Aorta (tissue), 5 donors: ENCODE measurements at regions of chr6 and their contacts with region 1.

Region 1: GRCh38 chr6:158704181-158704822 is 54.4 kb downstream of the SYTL3 start:
- DNase-seq: peak; percentile 85 to 95
- ATAC-seq: peak; percentile 95
- H3K4me3 ChIP-seq: no peak overlapping the region
- H3K27ac ChIP-seq: no peak overlapping the region
- H3K4me1 ChIP-seq: no peaks in the 10 kb centered on the region
- H3K27me3 ChIP-seq: no peaks in the 10 kb centered on the region

Region 2: GRCh38 chr6:158220786-158221442 is 483.4 kb before region 1 on chr6:
- intact Hi-C with region 1: loop called in 1 of 2 experiments (anchors 5 kb)
- DNase-seq: peak; percentile 83 to 93
- ATAC-seq: peak; percentile 91
- H3K4me3 ChIP-seq: no peak overlapping the region
- H3K27ac ChIP-seq: no peak overlapping the region
- H3K4me1 ChIP-seq: no peaks in the 10 kb centered on the region
- H3K27me3 ChIP-seq: no peaks in the 10 kb centered on the region

Region 3: GRCh38 chr6:158629367-158630221 is 74.7 kb before region 1 on chr6:
- intact Hi-C with region 1: no loop called
- DNase-seq: no peak
- ATAC-seq: no peak
- H3K4me3 ChIP-seq: no peak overlapping the region
- H3K27ac ChIP-seq: no peak overlapping the region
- H3K4me1 ChIP-seq: no peaks in the 10 kb centered on the region
- H3K27me3 ChIP-seq: no peaks in the 10 kb centered on the region

Region 4: DNA sequence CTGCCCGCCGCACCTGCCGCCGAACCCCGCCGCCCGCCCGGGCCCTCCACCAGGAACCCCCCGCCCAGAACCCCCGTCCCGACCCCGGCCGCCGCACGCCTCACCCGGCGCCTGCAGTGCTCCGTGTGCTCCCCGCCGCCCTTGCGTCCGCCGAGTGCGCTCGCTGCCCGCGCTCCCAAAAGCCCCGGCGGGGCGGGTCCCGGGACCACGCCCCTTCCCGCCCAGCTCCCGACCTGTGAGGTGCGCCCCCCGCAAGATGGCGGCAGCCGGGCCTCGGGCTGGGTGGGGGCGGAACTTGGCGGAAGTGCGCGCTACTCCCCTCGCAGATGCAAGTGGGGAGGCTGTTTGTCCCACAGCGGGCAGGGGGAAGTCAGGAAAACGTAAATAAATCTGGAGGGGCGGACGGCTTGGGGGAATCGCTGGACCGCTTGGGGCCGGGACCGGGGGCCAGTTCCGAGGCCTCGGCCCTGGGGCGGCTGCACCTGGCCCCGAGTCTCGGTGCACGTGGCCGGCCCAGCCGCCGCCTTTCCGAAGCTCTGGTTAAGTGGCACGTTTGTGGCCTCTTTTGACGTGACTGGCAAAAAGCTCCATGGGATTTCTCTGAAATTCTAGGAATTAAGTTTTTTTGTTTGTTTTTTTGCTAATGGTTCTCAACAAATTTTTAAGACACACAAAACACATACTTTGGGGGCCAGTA is 115.1 kb after region 1 on chr6 and contains the start of gene EZR:
- intact Hi-C with region 1: loop called (anchors 10 kb)
- DNase-seq: peak; percentile 80 to 91
- ATAC-seq: peak; percentile 77
- H3K4me3 ChIP-seq: peak within 1 kb of the TSS; percentile 86 to 94
- H3K27ac ChIP-seq: peak within 1 kb of the TSS; percentile 34 to 50
- H3K4me1 ChIP-seq: no peaks in the 10 kb centered on the region
- H3K27me3 ChIP-seq: no peaks in the 10 kb centered on the region
- total RNA-seq, gene EZR: 44.8 to 56.2 TPM

Region 5: DNA sequence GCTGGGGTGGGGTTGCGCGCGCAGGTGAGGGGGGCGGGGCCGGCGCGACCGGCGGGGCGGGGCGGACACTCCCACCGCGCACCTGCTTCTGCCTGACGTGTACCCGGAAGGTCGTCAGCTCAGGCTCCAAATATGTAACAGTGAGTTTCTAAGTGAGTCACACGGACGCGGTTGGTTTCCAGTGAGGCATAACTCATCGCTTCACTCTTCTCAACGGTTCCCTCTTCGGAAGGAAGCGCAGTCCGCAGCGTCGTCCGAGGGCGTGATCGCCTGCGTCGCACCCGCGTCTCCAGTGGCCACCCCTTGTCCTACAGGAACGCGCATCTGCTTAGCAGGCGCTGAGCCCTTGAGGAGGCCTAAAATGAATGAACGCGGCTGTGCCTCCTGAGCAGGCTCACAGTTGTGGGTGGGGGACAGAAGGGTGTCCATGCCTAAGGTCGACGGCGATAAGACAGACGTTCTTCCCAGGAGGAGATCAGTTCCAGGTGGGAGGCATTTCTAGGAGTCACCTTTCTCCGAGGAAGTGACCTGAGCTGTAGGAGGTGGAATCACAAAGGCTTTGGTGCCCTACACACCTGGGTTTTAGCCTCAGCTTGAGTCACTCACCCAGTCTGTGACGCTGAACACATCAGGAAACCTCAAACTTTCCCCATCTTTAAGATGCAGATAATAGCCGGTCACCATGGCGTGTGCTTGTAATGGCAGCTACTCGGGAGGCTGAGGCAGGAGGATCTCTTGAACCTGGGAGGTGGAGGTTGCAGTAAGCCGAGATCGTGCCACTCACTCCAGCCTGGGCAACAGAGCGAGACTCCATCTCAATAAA is 165.7 kb after region 1 on chr6:
- intact Hi-C with region 1: loop called in 1 of 2 experiments (anchors 5 kb)
- DNase-seq: peak; percentile 84 to 89
- ATAC-seq: no peak
- H3K4me3 ChIP-seq: peak overlapping the region; percentile 37 to 46
- H3K27ac ChIP-seq: no peak overlapping the region
- H3K4me1 ChIP-seq: no peaks in the 10 kb centered on the region
- H3K27me3 ChIP-seq: no peaks in the 10 kb centered on the region

Region 6: GRCh38 chr6:158972241-158973233 is 268.2 kb after region 1 on chr6:
- intact Hi-C with region 1: loop called (anchors 1 to 5 kb)
- DNase-seq: no peak
- ATAC-seq: no peak
- H3K4me3 ChIP-seq: no peak overlapping the region
- H3K27ac ChIP-seq: no peak overlapping the region
- H3K4me1 ChIP-seq: no peaks in the 10 kb centered on the region
- H3K27me3 ChIP-seq: no peaks in the 10 kb centered on the region

Region 7: DNA sequence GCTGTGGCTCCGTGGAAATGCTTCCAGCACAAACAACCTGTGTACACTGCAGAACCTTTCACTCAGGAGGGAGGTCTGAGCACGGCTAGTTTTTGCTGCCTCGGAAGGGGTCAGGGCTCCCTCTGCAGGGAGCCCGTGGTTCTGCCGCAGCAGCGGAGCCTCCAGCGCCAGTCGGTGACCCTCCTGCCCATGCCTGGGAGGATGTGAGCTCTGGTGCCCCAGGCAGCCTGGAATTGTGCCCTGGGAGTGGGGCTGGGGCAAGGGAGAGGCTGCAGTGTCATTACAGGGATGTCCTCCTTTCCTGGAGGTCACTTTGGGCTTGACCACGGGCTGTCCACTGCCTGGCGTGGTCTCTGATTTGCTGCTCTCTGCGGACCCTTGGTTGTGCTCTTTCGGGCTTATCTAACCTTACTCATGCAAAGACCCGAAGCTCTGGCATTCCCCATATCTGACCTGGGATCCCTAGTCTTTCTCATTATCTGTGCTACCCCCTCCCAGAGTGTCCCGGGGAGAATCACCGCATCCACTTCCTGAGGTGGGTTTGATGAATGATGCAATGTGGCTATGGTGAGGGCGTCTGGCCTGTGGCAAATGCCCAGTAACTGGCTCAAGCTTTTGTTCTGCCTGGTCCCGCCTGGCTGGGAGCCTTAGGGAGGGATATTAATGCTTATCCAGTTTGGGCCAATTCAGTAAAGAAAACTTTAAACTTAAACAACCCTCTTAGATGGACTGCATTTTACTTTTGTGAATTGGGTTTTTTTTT is 400.0 kb after region 1 on chr6:
- intact Hi-C with region 1: loop called in 1 of 2 experiments (anchors 2 kb)
- DNase-seq: peak; percentile 72 to 81
- ATAC-seq: peak; percentile 75
- H3K4me3 ChIP-seq: no peak overlapping the region
- H3K27ac ChIP-seq: no peak overlapping the region
- H3K4me1 ChIP-seq: no peaks in the 10 kb centered on the region
- H3K27me3 ChIP-seq: no peaks in the 10 kb centered on the region